PC-9 (cell line): ENCODE measurements at regions of chr2 and their contacts with region 1.

Region 1: DNA sequence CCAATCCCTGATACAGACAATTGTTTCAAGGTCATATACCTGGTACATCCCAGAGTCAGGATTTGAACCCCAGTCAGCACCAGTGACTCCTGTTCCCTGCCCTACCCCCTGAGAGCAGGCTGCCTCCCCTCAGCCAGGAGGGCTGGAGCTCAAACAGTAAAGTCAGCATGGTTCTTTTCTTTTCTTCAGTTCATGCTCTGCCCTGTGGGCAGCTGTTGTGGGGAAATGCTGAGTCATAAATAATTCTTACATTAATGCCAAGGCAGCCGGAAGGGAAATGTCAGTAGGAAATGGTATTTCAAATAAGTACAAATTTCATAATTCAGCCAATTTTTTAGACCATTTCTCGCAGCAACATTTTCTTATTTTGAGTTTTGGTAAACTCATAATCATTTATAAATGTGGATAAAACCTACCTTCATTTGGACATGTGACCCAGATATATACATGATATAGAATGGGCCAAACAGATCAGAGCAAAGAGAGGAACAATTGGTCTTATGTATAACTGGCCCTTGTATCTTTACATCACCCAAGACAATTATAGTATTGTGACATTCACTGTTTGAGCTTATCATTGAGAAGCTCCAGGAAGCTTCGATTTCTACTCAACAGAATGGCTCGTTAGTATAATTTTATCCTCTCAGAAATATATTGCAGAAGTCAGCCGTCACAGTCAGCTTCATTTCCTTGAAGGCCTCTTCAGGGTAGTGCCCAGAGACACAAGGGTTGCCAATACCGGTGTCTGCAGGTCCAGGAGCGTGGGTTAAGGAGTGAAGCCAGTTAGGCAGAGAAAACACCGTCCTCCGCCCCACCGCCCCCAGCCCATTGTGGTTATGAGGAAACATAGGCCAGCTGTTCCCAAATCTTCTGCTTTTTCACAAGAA is 28.0 kb upstream of the SCYGR1 start:
- DNase-seq: peak; percentile 34 to 68
- H3K4me3 ChIP-seq: no peak overlapping the region
- H3K27ac ChIP-seq: peak overlapping the region; percentile 71
- H3K4me1 ChIP-seq: peaks cover 53% of the 10 kb centered on the region
- H3K27me3 ChIP-seq: no peaks in the 10 kb centered on the region
- CTCF ChIP-seq: no peak

Region 2: DNA sequence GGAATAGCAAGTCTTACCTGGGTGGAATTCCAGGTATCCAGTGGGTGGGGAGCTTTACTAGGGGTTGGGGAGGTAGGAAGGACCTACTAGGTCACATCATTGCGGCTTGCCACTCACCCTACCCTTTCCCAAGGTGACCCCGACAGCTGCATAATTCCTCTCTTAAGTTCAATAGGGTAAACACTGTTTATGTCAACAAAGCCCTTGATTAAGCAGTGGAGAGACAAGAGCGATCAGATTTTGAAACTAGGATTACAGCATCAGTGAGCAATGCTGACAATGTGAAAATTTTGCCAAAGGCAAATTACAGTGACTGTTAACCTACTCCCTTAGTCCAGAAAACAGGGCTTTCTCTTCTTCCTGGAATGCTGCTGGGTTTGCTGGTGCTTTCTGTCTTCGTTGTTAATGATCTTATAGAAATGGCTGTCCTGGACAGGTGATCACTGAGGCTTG is 287.5 kb after region 1 on chr2:
- CTCF ChIA-PET with region 1: no interaction called
- POLR2A ChIA-PET with region 1: interaction called, 11 read pairs
- intact Hi-C with region 1: no loop called
- DNase-seq: peak; percentile 75 to 94
- H3K4me3 ChIP-seq: peak overlapping the region; percentile 41
- H3K27ac ChIP-seq: peak overlapping the region; percentile 92
- H3K4me1 ChIP-seq: peaks cover 37% of the 10 kb centered on the region
- H3K27me3 ChIP-seq: no peaks in the 10 kb centered on the region
- CTCF ChIP-seq: no peak